Mammary epithelial cell (primary cell): ENCODE measurements at regions of chr2 and their contacts with region 1.

Region 1: GRCh38 chr2:219362524-219363164 is 25.1 kb downstream of the DNPEP start:
- DNase-seq: peak; percentile 75
- H3K4me3 ChIP-seq: no peak overlapping the region
- H3K27ac ChIP-seq: no peak overlapping the region
- H3K4me1 ChIP-seq: peaks cover 15% of the 10 kb centered on the region
- H3K27me3 ChIP-seq: peaks cover 19% of the 10 kb centered on the region
- CTCF ChIP-seq: no peak

Region 2: DNA sequence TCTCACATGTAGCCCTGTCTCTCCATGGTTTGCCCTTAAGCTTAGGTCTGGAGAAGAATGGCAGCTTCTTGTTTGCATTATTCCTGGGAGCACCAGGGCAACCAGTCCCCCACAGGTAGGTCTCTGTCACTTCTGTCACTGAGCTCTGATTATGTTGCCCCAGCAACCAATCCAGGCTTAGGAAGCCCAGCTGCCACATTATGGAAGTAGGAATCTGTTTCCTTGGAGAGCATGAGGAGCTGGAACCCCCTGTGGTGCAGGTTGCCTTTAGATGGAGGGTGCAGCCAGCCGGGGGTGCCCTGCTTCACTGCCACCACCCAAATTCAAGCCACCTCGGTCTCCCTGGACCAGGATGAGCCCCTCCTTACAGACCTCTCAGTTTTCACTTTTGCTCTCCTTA is 34.9 kb before region 1 on chr2:
- CTCF ChIA-PET with region 1: no interaction called
- dilution Hi-C with region 1: loop called (anchors 5 kb)
- in situ Hi-C with region 1: no loop called
- intact Hi-C with region 1: no loop called
- DNase-seq: no peak
- H3K4me3 ChIP-seq: no peak overlapping the region
- H3K27ac ChIP-seq: no peak overlapping the region
- H3K4me1 ChIP-seq: no peaks in the 10 kb centered on the region
- H3K27me3 ChIP-seq: peaks cover 10% of the 10 kb centered on the region
- CTCF ChIP-seq: no peak